Dendritic cell treated with granulocyte-macrophage colony-stimulating factor and Interleukin-4, amounts not matched to agents 40 ng/mL and 50 ng/mL, for 4 days (primary cell): ENCODE measurements at regions of chr16 and their contacts with region 1.

Region 1: GRCh38 chr16:47073223-47074155 is 70.3 kb downstream of the NETO2 start:
- H3K4me3 Mint-ChIP-seq: no peak overlapping the region
- H3K27ac Mint-ChIP-seq: no peak overlapping the region
- H3K4me1 Mint-ChIP-seq: no peaks in the 10 kb centered on the region
- H3K27me3 Mint-ChIP-seq: no peaks in the 10 kb centered on the region

Region 2: DNA sequence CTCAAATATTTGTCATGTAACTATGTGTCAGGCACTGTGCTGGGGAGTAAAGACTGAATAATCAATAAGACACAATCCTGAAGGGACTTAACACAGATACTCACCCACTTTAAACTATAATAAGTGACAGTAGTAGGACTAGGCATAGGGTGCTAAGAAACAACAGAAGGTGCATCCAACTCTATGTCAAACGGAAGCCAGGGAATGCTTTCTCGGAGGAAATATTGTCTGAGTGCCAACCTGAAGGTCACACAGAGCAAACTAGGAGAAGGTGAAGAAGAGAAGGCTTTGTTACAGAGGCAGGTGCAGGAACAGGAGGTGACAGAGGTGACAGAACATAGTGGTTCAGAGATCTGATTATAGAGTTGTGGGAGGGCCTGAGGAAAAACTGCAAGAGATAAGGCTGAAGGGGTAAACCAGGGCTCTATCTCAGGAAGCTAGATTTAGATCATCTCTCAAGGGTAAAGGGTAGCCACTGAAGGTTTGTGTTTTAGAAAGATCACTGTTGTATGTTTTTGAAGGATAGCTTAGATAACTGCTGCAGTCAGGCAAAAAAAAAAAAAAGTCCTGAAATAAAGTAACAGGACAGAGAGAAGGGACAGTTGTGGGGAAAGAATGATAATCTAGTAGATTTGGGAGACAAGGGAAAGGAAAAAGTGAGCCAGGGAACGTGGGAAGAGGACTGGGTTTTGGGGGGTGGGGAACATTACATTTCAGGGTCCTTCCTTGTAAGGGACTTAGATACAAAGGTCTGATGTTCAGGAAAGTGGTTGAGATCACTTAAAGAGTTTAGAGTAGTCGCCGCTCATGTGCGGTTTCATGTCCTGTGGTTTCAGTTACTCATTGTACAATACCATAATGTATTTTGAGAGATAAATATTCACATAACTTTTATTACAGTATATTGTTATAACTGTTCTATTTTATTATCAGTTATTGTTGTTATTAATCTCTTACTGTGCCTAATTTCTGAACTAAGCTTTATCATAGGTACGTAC is 155.9 kb after region 1 on chr16:
- intact Hi-C with region 1: loop called (anchors 10 kb)
- H3K4me3 Mint-ChIP-seq: no peak overlapping the region
- H3K27ac Mint-ChIP-seq: no peak overlapping the region
- H3K4me1 Mint-ChIP-seq: no peaks in the 10 kb centered on the region
- H3K27me3 Mint-ChIP-seq: no peaks in the 10 kb centered on the region